ENCODE measurements at regions of chr1 and their contacts with region 1.

Region 1: GRCh38 chr1:201170533-201171062 is 16.3 kb upstream of the TMEM9 start:
- DNase-seq: peak; percentile 92 to 99
- ATAC-seq: peak; percentile 96 to 99
- H3K4me3 ChIP-seq: peak overlapping the region; percentile 53
- H3K27ac ChIP-seq: peak overlapping the region; percentile 81 to 92
- H3K4me1 ChIP-seq: peaks cover 34% of the 10 kb centered on the region
- CTCF ChIP-seq: no peak
- EP300 ChIP-seq: peak in 1 of 2 experiments; percentile 62; a peak in 1 of 5 replicates
- POLR2A ChIP-seq: peak; percentile 61
- RAD21 ChIP-seq: no peak

Region 2: DNA sequence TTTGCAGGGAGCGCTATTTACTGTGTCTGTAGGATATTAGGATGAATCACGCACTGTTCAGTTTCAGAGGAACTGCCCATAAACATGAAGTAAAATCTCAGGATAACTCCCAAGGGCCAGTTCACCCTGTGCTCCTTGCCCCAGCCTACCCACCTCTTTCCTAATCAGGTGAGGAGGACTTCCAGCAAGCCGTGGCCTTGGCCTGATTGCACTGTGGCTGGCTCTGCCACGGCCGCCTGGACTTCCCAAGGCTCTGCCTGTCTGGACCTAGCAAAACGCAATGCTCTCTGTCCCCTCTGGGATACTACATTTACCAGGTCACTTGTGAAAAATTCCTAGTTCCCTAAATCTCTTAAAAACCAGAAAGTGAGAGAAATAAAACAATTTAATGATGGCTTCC is 36.2 kb before region 1 on chr1:
- CTCF ChIA-PET with region 1: no interaction called
- POLR2A ChIA-PET with region 1: no interaction called
- DNase-seq: no peak
- ATAC-seq: no peak
- H3K4me3 ChIP-seq: no peak overlapping the region
- H3K27ac ChIP-seq: no peak overlapping the region
- H3K4me1 ChIP-seq: peaks cover 13% of the 10 kb centered on the region; the same call in 1 of the 3 replicates
- CTCF ChIP-seq: no peak
- EP300 ChIP-seq: no peak
- POLR2A ChIP-seq: no peak
- RAD21 ChIP-seq: no peak

Region 3: DNA sequence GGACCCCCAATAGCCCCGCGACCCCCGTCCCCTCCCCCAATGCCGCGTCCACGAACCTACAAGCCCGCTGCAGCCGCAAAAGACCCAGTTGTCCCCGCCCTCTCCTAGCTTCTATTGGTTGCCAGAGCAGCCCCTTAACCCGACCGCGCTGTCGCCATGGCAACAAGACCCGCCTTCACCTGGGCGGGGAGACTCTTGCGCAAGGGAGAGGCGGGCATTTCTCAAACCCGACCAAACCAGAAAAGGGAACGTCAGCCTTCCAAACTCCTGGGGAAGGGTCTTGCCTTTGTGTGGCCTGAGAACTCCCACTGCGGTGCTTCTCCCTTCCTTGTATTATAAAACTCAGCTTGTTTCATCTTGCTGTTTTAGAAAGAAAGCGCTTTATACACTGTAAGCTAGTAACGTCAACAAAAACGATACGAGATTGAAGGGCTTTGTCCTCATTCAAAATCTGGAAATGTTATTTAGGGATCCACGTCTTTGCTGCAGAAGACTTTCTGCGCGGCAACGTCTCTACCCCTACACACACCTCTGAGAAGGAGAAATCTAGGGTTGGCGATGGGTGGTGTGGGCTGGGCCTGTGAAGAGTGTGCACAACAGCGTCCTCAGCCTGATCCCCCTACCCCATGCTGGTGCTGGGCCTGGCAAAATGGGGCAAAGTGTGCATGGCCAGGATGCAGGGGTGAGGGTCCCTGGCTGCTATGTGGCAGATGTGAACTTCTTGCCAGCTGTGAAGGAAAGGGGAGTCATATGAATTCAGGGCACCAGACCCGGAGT is 16.0 kb before region 1 on chr1 and contains the start of gene TMEM9:
- CTCF ChIA-PET with region 1: interaction called, 32 read pairs
- POLR2A ChIA-PET with region 1: interaction called, 5 read pairs
- DNase-seq: peak; percentile 93 to 97
- ATAC-seq: peak; percentile 88 to 95
- H3K4me3 ChIP-seq: peak within 1 kb of the TSS; percentile 95
- H3K27ac ChIP-seq: peak within 1 kb of the TSS; percentile 91 to 97
- H3K4me1 ChIP-seq: peaks cover 7% of the 10 kb centered on the region
- CTCF ChIP-seq: no peak
- EP300 ChIP-seq: no peak
- POLR2A ChIP-seq: no peak
- RAD21 ChIP-seq: no peak
- polyA plus RNA-seq, gene TMEM9: 97.0 and 119 TPM in 2 replicates

Region 4: GRCh38 chr1:201184307-201185122 is 13.9 kb after region 1 on chr1:
- CTCF ChIA-PET with region 1: interaction called, 16 read pairs
- POLR2A ChIA-PET with region 1: no interaction called
- DNase-seq: peak; percentile 29 to 54
- ATAC-seq: peak; percentile 87 to 95
- H3K4me3 ChIP-seq: no peak overlapping the region
- H3K27ac ChIP-seq: peak overlapping the region in 1 of 2 experiments; percentile 33; a peak in 2 of 6 replicates
- H3K4me1 ChIP-seq: 0 out of 3 replicates have a peak, but pooled peaks cover 5% of the 10 kb centered on the region
- CTCF ChIP-seq: peak; percentile 24; the same call in 2 of the 3 replicates
- EP300 ChIP-seq: no peak
- POLR2A ChIP-seq: no peak
- RAD21 ChIP-seq: peak; percentile 22 to 39; a peak in 2 of 5 replicates